ENCODE measurements at regions of chr2 and their contacts with region 1.

Region 1: GRCh38 chr2:25567406-25567805 is 106.0 kb downstream of the DTNB start:
- DNase-seq: peak in 1 of 2 donors; percentile 49
- ATAC-seq: peak; percentile 60 to 88 (median 77)
- H3K4me3 ChIP-seq: no peak overlapping the region
- H3K4me3 Mint-ChIP-seq: peak overlapping the region; percentile 58
- H3K27ac ChIP-seq: no peak overlapping the region
- H3K27ac Mint-ChIP-seq: peak overlapping the region; percentile 65 to 87
- H3K4me1 ChIP-seq: peaks cover 6% of the 10 kb centered on the region
- H3K4me1 Mint-ChIP-seq: peaks cover 15 to 16% of the 10 kb centered on the region in 2 donors
- H3K27me3 ChIP-seq: no peaks in the 10 kb centered on the region
- H3K27me3 Mint-ChIP-seq: no peaks in the 10 kb centered on the region
- CTCF ChIP-seq: peak; percentile 62

Region 2: DNA sequence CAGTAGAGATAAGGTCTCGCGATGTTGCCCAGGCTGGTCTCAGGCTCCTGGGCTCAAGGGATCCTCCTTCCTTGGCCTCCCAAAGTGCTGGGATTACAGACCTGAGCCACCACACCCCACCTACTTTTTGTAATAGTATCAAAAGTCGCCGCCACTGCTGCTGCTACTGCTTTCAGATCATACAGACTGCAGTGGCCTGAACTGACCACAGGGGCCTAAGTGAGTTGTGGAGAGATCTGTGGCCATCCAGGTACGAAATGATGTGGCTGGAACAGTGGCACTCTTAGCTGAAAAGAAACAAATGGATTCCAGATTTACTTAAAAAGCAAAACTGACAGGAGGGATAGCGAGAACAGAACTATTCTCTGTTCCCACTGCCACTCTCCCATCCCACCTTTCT is 366.1 kb before region 1 on chr2:
- intact Hi-C with region 1: loop called (anchors 5 kb)
- DNase-seq: no peak
- ATAC-seq: no peak
- H3K4me3 ChIP-seq: no peak overlapping the region
- H3K4me3 Mint-ChIP-seq: no peak overlapping the region
- H3K27ac ChIP-seq: no peak overlapping the region
- H3K27ac Mint-ChIP-seq: no peak overlapping the region
- H3K4me1 ChIP-seq: peaks cover 23% of the 10 kb centered on the region
- H3K4me1 Mint-ChIP-seq: no peaks in the 10 kb centered on the region
- H3K27me3 ChIP-seq: no peaks in the 10 kb centered on the region
- H3K27me3 Mint-ChIP-seq: peaks cover 0 to 2% of the 10 kb centered on the region in 2 donors
- CTCF ChIP-seq: no peak

Region 3: GRCh38 chr2:25276569-25277465 is 290.6 kb before region 1 on chr2:
- intact Hi-C with region 1: loop called (anchors 10 kb)
- DNase-seq: peak; percentile 83 to 84
- ATAC-seq: peak; percentile 61 to 77 (median 68)
- H3K4me3 ChIP-seq: peak overlapping the region; percentile 42
- H3K4me3 Mint-ChIP-seq: peak overlapping the region; percentile 79
- H3K27ac ChIP-seq: peak overlapping the region; percentile 95
- H3K27ac Mint-ChIP-seq: peak overlapping the region; percentile 88 to 96
- H3K4me1 ChIP-seq: peaks cover 84% of the 10 kb centered on the region
- H3K4me1 Mint-ChIP-seq: peaks cover 44 to 56% of the 10 kb centered on the region in 2 donors
- H3K27me3 ChIP-seq: no peaks in the 10 kb centered on the region
- H3K27me3 Mint-ChIP-seq: no peaks in the 10 kb centered on the region
- CTCF ChIP-seq: peak; percentile 92

Region 4: GRCh38 chr2:25342372-25343186 is 224.8 kb before region 1 on chr2:
- intact Hi-C with region 1: loop called (anchors 1 kb)
- DNase-seq: peak; percentile 82 to 90
- ATAC-seq: peak; percentile 93 to 98 (median 94)
- H3K4me3 ChIP-seq: peak overlapping the region; percentile 20
- H3K4me3 Mint-ChIP-seq: peak overlapping the region; percentile 91
- H3K27ac ChIP-seq: no peak overlapping the region
- H3K27ac Mint-ChIP-seq: peak overlapping the region in 1 of 2 donors; percentile 85
- H3K4me1 ChIP-seq: peaks cover 33% of the 10 kb centered on the region
- H3K4me1 Mint-ChIP-seq: peaks cover 8 to 19% of the 10 kb centered on the region in 2 donors
- H3K27me3 ChIP-seq: no peaks in the 10 kb centered on the region
- H3K27me3 Mint-ChIP-seq: no peaks in the 10 kb centered on the region
- CTCF ChIP-seq: peak; percentile 95

Region 5: GRCh38 chr2:26139269-26140183 is 572.1 kb after region 1 on chr2:
- intact Hi-C with region 1: no loop called
- DNase-seq: no peak
- ATAC-seq: no peak
- H3K4me3 ChIP-seq: no peak overlapping the region
- H3K4me3 Mint-ChIP-seq: no peak overlapping the region
- H3K27ac ChIP-seq: no peak overlapping the region
- H3K27ac Mint-ChIP-seq: peak overlapping the region in 1 of 2 donors; percentile 7
- H3K4me1 ChIP-seq: no peaks in the 10 kb centered on the region
- H3K4me1 Mint-ChIP-seq: peaks cover 0 to 14% of the 10 kb centered on the region in 2 donors
- H3K27me3 ChIP-seq: no peaks in the 10 kb centered on the region
- H3K27me3 Mint-ChIP-seq: no peaks in the 10 kb centered on the region
- CTCF ChIP-seq: no peak

Measured in natural killer cell (primary cell).